Activated CD4-positive, alpha-beta memory T cell treated with anti-CD3 and anti-CD28 coated beads for 36 hours (primary cell): ENCODE measurements at regions of chr10 and their contacts with region 1.

Region 1: DNA sequence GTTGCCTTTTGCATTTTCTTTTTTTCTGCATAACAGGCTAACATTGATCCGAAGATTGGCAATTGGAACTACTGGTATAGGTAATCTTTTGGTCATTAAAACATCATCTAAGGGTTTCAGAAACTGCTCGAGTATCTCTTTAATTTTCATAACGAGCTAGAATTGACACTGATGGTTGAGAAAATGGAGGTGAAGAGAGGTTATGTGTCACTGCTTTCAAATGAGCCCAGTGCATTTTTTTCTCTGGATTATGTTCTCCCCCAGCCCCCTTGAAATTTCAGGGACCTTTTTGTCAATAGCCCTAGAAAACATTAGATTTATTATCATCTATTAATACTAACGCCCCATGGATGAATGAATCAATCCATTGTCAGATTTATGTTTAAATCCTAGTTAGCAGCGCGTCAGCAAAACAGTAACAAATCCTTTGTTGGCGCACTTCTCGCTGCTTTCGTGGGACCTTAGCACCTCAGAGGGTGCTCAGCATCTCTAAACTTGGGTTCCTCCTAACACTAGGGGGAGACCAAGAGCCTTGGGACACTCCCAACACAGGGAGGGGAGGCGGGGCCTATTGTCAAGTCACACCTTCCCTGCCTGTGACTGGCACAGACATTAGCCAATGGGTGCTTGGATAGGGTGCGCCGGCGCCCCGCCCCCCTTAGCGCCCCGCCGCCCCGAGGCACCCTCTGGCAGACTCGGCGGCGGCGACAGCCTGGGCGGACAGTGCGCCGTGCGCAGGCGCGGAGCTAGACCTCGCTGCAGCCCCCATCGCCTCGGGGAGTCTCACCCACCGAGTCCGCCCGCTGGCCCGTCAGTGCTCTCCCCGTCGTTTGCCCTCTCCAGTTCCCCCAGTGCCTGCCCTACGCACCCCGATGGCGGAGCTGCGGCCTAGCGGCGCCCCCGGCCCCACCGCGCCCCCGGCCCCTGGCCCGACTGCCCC is at the start of gene SUFU:
- DNase-seq: peak; percentile 98
- H3K4me3 Mint-ChIP-seq: peak within 1 kb of the TSS; percentile 95
- H3K27ac Mint-ChIP-seq: peak within 1 kb of the TSS; percentile 79
- H3K4me1 Mint-ChIP-seq: peaks cover 23% of the 10 kb centered on the region
- H3K27me3 Mint-ChIP-seq: no peaks in the 10 kb centered on the region
- total RNA-seq, gene SUFU: 8.2 to 10.0 TPM

Region 2: GRCh38 chr10:100998991-100999741 is 1504.4 kb before region 1 on chr10:
- CTCF ChIA-PET with region 1: no interaction called
- POLR2A ChIA-PET with region 1: no interaction called
- intact Hi-C with region 1: loop called (anchors 2 kb)
- DNase-seq: peak; percentile 81
- H3K4me3 Mint-ChIP-seq: peak overlapping the region; percentile 76
- H3K27ac Mint-ChIP-seq: peak overlapping the region; percentile 79
- H3K4me1 Mint-ChIP-seq: peaks cover 20% of the 10 kb centered on the region
- H3K27me3 Mint-ChIP-seq: no peaks in the 10 kb centered on the region

Region 3: DNA sequence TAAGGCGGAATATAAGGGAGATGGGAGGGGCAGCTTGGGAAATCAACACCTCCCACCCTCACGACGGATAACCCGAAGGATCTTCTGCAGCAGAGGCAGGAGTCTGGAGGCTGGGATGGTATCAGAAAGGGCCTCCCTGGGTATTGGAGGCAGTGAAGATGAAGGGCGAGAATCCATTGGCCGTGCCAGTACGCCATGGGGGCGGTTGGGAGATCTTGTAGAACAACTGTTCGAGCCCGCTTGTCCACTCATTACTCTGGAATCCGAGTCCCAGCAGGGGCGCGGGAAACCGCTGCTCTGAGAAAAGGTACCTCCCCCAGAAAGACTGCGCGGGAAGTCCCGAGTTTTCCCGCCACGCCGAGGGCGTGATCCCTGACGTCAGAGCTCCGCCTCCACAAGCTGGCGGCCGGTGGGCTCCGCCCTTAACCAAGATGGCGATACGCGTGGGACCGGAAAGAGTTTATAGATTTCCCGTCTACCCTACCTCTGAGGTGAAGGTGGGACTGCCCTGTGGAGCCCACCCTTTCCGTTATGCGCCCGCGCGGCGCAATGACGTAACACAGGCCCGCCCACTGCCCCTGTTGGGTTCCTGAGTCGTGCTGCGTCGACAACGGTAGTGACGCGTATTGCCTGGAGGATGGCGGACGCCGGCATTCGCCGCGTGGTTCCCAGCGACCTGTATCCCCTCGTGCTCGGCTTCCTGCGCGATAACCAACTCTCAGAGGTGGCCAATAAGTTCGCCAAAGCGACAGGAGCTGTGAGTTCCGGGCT is 351.6 kb before region 1 on chr10 and contains the start of gene NOLC1:
- CTCF ChIA-PET with region 1: no interaction called
- POLR2A ChIA-PET with region 1: no interaction called
- intact Hi-C with region 1: loop called (anchors 1 kb)
- DNase-seq: peak; percentile 100
- H3K4me3 Mint-ChIP-seq: peak within 1 kb of the TSS; percentile 96
- H3K27ac Mint-ChIP-seq: peak within 1 kb of the TSS; percentile 98
- H3K4me1 Mint-ChIP-seq: peaks cover 53% of the 10 kb centered on the region
- H3K27me3 Mint-ChIP-seq: no peaks in the 10 kb centered on the region
- total RNA-seq, gene NOLC1: 165 to 168 TPM

Region 4: DNA sequence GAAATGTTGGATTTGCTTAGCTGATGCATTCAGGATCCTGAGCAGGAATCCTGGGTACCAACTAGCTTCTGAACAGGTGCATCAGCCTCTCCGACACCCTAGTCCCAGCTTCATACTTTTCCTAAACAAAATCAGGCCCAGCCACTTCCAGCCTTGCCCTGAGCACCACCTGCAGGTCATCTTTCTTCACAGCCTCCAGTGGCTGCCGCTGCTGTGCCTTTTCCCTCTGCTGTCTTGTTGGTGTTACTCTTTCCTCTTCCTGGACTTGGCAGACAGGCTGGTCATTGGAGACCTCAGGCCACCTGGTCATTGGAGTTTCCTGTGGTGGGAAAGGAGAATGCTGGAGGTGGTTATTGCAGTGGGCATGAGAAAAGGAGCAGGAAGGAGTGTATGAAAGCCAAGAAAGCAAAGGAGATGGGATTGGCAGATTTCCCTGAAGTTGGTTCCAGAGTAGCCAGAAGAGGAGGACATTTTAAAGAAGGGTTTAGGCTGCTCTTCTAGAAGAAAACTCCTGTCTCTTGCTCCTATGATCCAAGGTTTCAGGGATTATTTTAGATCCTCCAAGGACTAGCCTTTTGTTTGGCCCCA is 156.2 kb before region 1 on chr10:
- CTCF ChIA-PET with region 1: no interaction called
- POLR2A ChIA-PET with region 1: no interaction called
- intact Hi-C with region 1: no loop called
- DNase-seq: peak; percentile 56
- H3K4me3 Mint-ChIP-seq: no peak overlapping the region
- H3K27ac Mint-ChIP-seq: no peak overlapping the region
- H3K4me1 Mint-ChIP-seq: peaks cover 17% of the 10 kb centered on the region
- H3K27me3 Mint-ChIP-seq: no peaks in the 10 kb centered on the region

Region 5: GRCh38 chr10:102420810-102421644 is 82.5 kb before region 1 on chr10 and contains the start of gene FBXL15:
- CTCF ChIA-PET with region 1: no interaction called
- POLR2A ChIA-PET with region 1: no interaction called
- intact Hi-C with region 1: loop called (anchors 1 kb)
- DNase-seq: peak; percentile 98
- H3K4me3 Mint-ChIP-seq: peak within 1 kb of the TSS; percentile 94
- H3K27ac Mint-ChIP-seq: peak within 1 kb of the TSS; percentile 92
- H3K4me1 Mint-ChIP-seq: peaks cover 35% of the 10 kb centered on the region
- H3K27me3 Mint-ChIP-seq: peaks cover 20% of the 10 kb centered on the region
- total RNA-seq, gene FBXL15: 10.8 to 11.4 TPM

Region 6: GRCh38 chr10:102461187-102462054 is 42.1 kb before region 1 on chr10:
- CTCF ChIA-PET with region 1: no interaction called
- POLR2A ChIA-PET with region 1: no interaction called
- intact Hi-C with region 1: loop called (anchors 1 kb)
- DNase-seq: peak; percentile 95
- H3K4me3 Mint-ChIP-seq: peak overlapping the region; percentile 82
- H3K27ac Mint-ChIP-seq: peak overlapping the region; percentile 47
- H3K4me1 Mint-ChIP-seq: peaks cover 23% of the 10 kb centered on the region
- H3K27me3 Mint-ChIP-seq: no peaks in the 10 kb centered on the region

Region 7: DNA sequence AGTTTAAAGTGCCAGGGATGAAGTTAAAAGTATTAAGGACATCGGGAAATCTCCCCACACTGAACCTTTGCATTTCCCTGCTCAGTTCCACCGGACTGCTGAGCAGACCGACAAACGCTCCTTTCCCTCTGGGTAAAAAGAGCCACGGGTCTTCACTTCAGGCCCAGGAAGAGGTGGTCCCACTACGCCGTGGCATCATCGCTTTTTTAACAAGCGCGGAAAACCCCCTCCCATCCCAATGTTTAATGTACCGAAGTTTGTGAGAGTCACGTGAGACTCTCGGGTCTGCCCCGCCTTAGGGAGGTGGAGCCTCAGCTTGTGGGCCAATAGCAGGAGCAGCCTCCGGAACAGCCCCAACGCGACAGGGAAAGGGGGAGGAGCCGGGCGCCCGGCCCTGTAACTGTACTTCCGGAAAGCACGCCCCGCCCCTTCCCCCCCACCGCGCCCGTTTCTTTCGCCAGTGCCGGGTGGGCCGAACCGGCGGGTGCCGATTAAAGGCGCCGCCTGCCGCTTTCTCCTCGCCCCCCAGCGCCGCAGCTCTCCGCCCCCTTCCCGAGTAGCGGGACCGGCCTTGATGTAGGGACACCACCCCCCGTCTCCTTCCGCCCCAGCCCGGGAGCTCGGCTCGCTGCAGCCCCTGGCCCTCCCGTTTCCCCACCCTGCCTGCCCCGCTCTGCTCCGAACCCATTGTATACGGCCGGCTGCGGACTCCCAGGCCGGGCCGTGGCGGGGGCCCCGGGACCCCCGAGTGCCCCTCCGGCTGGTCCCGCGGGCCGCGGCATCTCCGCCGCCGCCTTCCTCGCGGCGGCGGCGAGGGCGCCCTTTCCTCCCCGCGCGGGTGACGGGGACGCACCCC is 138.6 kb after region 1 on chr10:
- CTCF ChIA-PET with region 1: interaction called, 7 read pairs
- POLR2A ChIA-PET with region 1: interaction called, 14 read pairs
- intact Hi-C with region 1: loop called (anchors 1 kb)
- DNase-seq: peak; percentile 99
- H3K4me3 Mint-ChIP-seq: peak overlapping the region; percentile 87
- H3K27ac Mint-ChIP-seq: peak overlapping the region; percentile 95
- H3K4me1 Mint-ChIP-seq: peaks cover 17% of the 10 kb centered on the region
- H3K27me3 Mint-ChIP-seq: no peaks in the 10 kb centered on the region

Region 8: DNA sequence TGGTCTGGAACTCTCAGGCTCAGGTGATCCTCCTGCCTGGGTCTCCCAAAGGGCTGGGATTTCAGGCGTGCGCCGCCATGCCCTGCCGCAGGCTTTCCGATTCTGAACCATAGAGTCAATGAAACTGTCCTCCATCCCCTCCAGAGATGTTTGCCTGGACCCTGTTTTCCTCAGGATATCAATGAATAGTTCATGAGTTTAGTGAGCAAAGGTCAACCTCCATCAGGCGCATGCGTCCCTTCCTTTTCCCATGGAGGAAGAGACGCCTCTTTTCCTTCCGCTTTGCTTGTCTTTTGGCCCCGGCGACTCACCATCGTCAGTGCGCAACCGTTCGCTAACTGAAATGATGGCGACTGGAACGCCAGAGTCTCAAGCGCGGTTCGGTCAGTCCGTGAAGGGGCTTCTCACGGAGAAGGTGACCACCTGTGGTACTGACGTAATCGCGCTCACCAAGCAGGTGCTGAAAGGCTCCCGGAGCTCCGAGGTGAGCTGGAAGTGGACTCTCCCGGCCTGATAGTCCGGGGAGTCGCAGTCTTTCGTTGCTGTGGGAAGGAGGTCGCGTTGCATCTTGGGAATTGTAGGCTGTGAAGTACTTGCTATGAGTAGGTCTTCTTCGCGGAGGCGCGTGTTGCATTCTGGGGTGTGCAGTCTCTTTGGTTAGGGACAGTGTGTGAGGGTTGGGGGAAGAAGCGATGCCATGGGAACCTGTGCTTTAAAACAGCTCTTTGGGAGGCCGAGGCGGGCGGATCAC is 350.6 kb after region 1 on chr10 and contains the start of gene BORCS7:
- CTCF ChIA-PET with region 1: no interaction called
- POLR2A ChIA-PET with region 1: no interaction called
- intact Hi-C with region 1: loop called (anchors 1 kb)
- DNase-seq: peak; percentile 93
- H3K4me3 Mint-ChIP-seq: peak within 1 kb of the TSS; percentile 96
- H3K27ac Mint-ChIP-seq: peak within 1 kb of the TSS; percentile 94
- H3K4me1 Mint-ChIP-seq: peaks cover 14% of the 10 kb centered on the region
- H3K27me3 Mint-ChIP-seq: no peaks in the 10 kb centered on the region
- total RNA-seq, gene BORCS7: 5.0 to 5.9 TPM